A673 (cell line): ENCODE measurements at regions of chr15 and their contacts with region 1.

Region 1: DNA sequence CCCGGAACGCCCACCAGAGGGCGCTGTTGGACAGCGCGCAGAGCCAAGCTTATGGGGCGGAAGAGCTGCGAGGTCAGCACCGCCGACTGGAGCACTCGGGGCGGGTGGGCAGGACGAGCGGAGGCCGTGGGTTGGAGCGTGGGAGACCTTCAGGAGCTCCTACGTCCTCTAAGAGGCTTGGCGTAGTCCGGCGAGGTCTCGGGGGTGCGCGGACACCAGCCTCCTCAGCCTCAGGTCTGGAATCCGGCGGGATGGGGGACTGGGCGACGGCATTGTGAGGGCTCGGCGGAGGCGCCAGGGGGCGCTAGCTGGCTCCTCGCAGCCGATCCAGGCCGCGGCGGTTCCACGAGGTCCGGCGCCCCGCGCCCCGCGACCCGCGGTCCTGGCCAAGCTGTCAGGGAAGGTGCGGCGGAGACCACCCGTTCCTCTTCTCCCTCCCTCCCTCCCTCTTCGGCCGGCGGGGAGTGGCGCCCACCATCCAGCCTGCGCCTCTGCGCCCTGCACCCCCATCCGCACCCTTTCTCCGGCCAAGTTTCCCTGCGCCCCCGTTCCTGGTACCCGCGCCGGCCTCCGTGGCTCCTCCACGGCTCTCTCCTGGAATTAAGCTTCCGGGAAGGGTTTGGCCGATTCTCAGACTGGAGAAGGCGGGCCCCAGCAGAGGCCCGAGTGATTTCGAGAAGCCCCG is 24.3 kb upstream of the POLG start:
- DNase-seq: peak; percentile 80
- H3K4me3 ChIP-seq: peak overlapping the region; percentile 47
- H3K27ac ChIP-seq: no peak overlapping the region
- H3K4me1 ChIP-seq: peaks cover 10% of the 10 kb centered on the region
- H3K27me3 ChIP-seq: peaks cover 67% of the 10 kb centered on the region
- CTCF ChIP-seq: peak; percentile 99

Region 2: DNA sequence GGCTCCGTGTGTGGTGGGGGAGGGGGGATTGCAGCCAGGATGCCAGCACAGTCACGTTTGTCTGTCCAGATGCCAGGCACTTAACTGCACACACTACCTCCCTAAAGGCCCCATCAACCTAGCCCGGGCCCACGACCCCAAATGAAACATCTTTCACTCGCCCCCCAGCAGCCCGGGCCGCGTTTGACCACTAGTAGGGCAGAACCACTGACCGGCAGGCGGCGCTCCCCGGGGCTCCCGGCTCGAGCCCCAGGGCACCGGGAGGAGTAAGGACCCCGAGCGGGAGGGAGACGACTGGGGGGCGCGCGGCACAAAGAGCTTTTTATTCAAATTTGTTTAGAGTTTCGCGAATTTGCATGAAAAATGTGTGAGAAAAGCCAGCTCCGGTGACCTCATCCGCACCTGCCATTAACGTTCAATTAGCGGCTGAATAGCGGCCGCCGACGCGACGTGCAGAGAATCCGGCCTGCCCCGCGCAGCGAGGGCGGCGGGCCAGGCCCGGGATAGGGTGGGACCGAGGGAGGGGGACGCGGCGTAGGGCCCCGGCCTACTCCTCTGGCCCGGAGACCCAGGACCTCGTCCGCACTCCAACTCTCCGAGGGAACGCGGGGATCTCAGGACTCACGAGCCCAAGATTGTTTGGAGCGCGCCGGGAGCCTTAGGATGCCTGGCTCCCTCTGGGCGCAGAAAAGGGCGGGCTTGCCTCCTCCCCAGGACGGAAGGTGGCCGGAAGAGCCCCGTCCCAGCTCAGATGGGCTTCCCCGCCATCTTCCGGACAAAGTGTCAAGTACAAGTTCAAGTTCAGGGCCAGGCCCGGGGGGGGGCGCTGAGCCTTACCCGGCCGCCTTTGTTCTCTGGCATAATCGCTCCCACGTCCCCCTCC is 40.6 kb after region 1 on chr15:
- CTCF ChIA-PET with region 1: interaction called, 11 read pairs
- POLR2A ChIA-PET with region 1: no interaction called
- intact Hi-C with region 1: loop called (anchors 5 kb)
- DNase-seq: peak; percentile 54
- H3K4me3 ChIP-seq: peak overlapping the region; percentile 52
- H3K27ac ChIP-seq: no peak overlapping the region
- H3K4me1 ChIP-seq: peaks cover 4% of the 10 kb centered on the region
- H3K27me3 ChIP-seq: no peaks in the 10 kb centered on the region
- CTCF ChIP-seq: peak; percentile 64

Region 3: GRCh38 chr15:89423981-89424380 is 65.1 kb after region 1 on chr15:
- CTCF ChIA-PET with region 1: interaction called, 13 read pairs
- POLR2A ChIA-PET with region 1: no interaction called
- intact Hi-C with region 1: loop called (anchors 5 kb)
- DNase-seq: no peak
- H3K4me3 ChIP-seq: no peak overlapping the region
- H3K27ac ChIP-seq: no peak overlapping the region
- H3K4me1 ChIP-seq: no peaks in the 10 kb centered on the region
- H3K27me3 ChIP-seq: peaks cover 3% of the 10 kb centered on the region
- CTCF ChIP-seq: no peak

Region 4: GRCh38 chr15:89442671-89443307 is 83.9 kb after region 1 on chr15:
- CTCF ChIA-PET with region 1: interaction called, 11 read pairs
- POLR2A ChIA-PET with region 1: interaction called, 3 read pairs
- intact Hi-C with region 1: no loop called
- DNase-seq: peak; percentile 80
- H3K4me3 ChIP-seq: no peak overlapping the region
- H3K27ac ChIP-seq: no peak overlapping the region
- H3K4me1 ChIP-seq: peaks cover 7% of the 10 kb centered on the region
- H3K27me3 ChIP-seq: no peaks in the 10 kb centered on the region
- CTCF ChIP-seq: peak; percentile 90

Region 5: GRCh38 chr15:89556413-89557262 is 197.7 kb after region 1 on chr15:
- CTCF ChIA-PET with region 1: no interaction called
- POLR2A ChIA-PET with region 1: no interaction called
- intact Hi-C with region 1: loop called (anchors 5 kb)
- DNase-seq: peak; percentile 85
- H3K4me3 ChIP-seq: no peak overlapping the region
- H3K27ac ChIP-seq: no peak overlapping the region
- H3K4me1 ChIP-seq: no peaks in the 10 kb centered on the region
- H3K27me3 ChIP-seq: no peaks in the 10 kb centered on the region
- CTCF ChIP-seq: peak; percentile 83